Activated CD4-positive, alpha-beta T cell treated with anti-CD3 and anti-CD28 coated beads, Interleukin-2, amount 10 ng/mL, durations not matched to agents 7 days and 5 days (primary cell): ENCODE measurements at regions of chrX and their contacts with region 1.

Region 1: GRCh38 chrX:72018277-72019112 is 107.8 kb downstream of the NHSL2 start:
- DNase-seq: peak; percentile 72
- H3K4me3 Mint-ChIP-seq: no peak overlapping the region
- H3K27ac Mint-ChIP-seq: no peak overlapping the region
- H3K4me1 Mint-ChIP-seq: peaks cover 16% of the 10 kb centered on the region
- H3K27me3 Mint-ChIP-seq: peaks cover 49% of the 10 kb centered on the region

Region 2: DNA sequence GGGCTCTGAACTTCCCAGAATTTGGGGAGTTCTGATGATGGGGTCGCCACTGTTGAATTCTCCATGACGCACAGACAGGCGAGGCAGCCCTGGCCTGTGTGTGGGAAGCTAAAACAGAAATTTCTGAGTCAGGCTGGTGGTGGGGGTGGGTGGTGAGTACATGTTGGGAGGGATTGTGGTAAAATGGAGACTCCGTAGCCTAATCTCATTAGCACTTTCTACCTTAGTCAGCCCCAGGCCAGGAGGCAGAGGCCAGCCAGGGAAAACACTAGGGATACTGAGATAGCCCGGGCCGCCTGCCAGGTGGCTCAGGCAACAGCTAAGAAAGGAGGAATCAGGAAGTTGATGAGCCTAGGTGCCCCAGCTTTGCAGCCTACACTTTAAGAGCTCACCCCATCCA is 147.1 kb before region 1 on chrX:
- CTCF ChIA-PET with region 1: no interaction called
- POLR2A ChIA-PET with region 1: no interaction called
- DNase-seq: no peak
- H3K4me3 Mint-ChIP-seq: no peak overlapping the region
- H3K27ac Mint-ChIP-seq: no peak overlapping the region
- H3K4me1 Mint-ChIP-seq: no peaks in the 10 kb centered on the region
- H3K27me3 Mint-ChIP-seq: peaks cover 7% of the 10 kb centered on the region

Region 3: DNA sequence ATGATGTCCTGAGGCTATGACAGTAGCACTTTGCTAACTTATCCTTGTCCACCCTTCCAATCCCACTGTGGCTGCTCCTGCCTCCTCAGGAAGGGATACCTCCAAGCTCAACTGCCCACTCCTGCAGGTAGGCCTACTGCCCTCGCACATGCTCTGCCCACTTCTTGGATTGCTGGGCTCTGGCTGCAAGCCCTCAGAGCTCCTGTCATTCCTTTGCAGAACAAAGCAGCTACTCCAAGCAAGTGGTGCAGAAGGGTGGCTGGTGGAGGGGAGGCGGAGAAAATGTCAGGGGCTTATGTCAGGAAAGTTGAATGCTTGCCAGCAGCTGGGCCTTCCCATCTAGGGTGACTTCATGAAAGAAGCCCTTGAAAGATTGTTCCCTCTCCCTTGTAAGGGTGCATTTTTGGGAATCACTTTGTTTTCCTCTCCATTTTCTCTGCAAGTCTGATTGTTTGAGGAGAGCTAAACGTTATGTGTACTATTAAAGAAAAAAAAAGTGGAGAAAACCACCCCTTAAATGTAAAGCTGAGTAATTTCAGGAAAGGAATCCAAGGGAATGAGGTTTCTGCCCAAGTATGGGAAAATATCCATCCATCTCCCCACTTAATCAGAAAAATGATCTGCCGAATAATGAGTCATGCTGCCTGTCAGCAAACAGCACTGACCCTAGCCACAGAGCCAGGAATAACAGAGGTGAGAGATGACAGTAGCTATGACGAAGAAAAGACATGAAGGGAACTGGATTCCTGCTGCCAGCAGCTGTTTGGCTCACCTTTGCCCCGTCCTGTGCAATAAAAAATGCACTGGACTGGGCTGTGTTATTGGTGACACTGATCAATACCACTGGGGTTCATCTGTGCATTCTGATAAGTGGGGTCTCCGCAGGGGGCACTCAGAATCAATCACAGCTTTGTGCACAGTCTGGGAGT is 11.3 kb after region 1 on chrX:
- CTCF ChIA-PET with region 1: interaction called, 36 read pairs
- POLR2A ChIA-PET with region 1: no interaction called
- DNase-seq: no peak
- H3K4me3 Mint-ChIP-seq: no peak overlapping the region
- H3K27ac Mint-ChIP-seq: no peak overlapping the region
- H3K4me1 Mint-ChIP-seq: no peaks in the 10 kb centered on the region
- H3K27me3 Mint-ChIP-seq: peaks cover 7% of the 10 kb centered on the region

Region 4: GRCh38 chrX:72159769-72160168 is 141.3 kb after region 1 on chrX:
- CTCF ChIA-PET with region 1: no interaction called
- POLR2A ChIA-PET with region 1: no interaction called
- DNase-seq: no peak
- H3K4me3 Mint-ChIP-seq: no peak overlapping the region
- H3K27ac Mint-ChIP-seq: no peak overlapping the region
- H3K4me1 Mint-ChIP-seq: no peaks in the 10 kb centered on the region
- H3K27me3 Mint-ChIP-seq: peaks cover 3% of the 10 kb centered on the region